ENCODE measurements at regions of chr4 and their contacts with region 1.

Region 1: GRCh38 chr4:177441803-177442622 is at the start of gene AGA:
- DNase-seq: peak; percentile 89 to 97 (median 95)
- H3K4me3 ChIP-seq: peak within 1 kb of the TSS; percentile 51 to 89 (median 77)
- H3K27ac ChIP-seq: peak within 1 kb of the TSS; percentile 84 to 100 (median 97)
- H3K27me3 ChIP-seq: no peaks in the 10 kb centered on the region
- CTCF ChIP-seq: peak in 30 of 56 donors; percentile 4 to 51 (median 25)
- total RNA-seq, gene AGA: 4.0 to 28.5 (median 12.0) TPM

Region 2: DNA sequence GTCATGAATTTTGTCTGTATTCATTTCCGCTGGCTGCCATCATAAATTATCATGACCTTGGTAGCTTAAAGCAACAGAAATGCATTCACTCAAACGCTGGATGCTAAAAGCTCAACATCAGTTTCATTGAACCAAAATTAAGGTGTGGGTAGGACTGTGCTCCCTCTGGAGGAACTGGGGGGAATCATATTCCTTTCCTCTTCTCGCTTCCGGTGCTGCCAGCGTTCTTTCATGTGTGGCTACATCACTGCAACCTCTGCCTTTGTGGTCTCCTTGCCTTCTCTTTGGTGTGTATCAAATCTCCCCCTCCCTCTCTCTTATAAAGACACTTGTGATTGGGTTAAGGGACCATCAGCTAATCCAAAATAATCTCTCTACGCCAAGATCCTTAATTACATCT is 92.8 kb before region 1 on chr4:
- intact Hi-C with region 1: loop called (anchors 5 to 10 kb)
- DNase-seq: no peak
- H3K4me3 ChIP-seq: no peak overlapping the region
- H3K27ac ChIP-seq: no peak overlapping the region
- H3K27me3 ChIP-seq: no peaks in the 10 kb centered on the region
- CTCF ChIP-seq: no peak

Region 3: DNA sequence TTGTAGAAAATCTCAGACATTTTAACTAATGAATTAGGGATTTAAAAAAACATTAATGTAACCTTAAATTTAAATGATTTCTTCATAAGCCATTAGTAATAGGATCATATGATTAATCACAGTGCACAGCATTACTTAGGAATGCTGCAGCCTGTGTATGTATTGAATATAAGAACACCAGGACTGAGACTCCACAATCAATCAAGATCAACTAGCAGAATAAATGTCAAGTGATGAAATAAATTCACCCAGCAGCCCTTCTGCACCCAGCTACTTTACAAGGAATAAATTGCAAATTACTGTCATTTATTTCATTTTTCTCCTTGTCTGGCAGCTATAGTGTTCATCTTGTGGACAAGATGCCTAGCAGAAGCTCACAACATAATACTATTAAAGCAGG is 85.8 kb before region 1 on chr4:
- intact Hi-C with region 1: loop called in 1 of 2 experiments (anchors 10 kb)
- DNase-seq: no peak
- H3K4me3 ChIP-seq: no peak overlapping the region
- H3K27ac ChIP-seq: no peak overlapping the region
- H3K27me3 ChIP-seq: peaks cover 0 to 2% (median 0%) of the 10 kb centered on the region in 45 donors
- CTCF ChIP-seq: no peak

Measured in dorsolateral prefrontal cortex (tissue), 120 donors.